Posterior vena cava (tissue), 2 donors: ENCODE measurements at regions of chr1 and their contacts with region 1.

Region 1: DNA sequence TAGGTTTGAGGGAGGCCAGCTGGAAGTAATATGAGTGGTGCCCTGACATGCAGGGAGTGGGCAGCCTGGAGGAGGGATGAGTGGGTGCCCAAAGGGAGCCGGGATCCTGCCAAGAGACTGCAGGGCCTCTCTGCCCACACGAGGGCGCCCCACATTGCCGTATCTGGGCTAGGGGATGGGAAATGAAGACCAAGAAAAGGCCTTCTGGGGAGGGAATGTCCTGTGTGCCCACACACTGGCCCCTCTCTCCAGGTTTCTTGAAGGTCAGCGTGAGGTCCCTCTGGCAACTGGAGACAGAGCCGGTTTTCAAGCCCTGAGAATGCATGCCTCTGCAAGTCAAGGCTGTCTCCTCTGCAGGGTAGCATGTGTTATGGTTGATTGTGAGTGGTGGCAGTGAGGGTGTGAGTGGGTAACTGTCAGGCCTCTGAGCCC is 94.1 kb upstream of the PPM1J start:
- DNase-seq: peak; percentile 92

Region 2: GRCh38 chr1:112715264-112716053 is 93.8 kb before region 1 on chr1 and contains the start of gene PPM1J:
- intact Hi-C with region 1: loop called (anchors 5 kb)
- DNase-seq: peak; percentile 99
- total RNA-seq, gene PPM1J: 2.1 to 3.0 TPM

Region 3: GRCh38 chr1:112840631-112841624 is 31.7 kb after region 1 on chr1:
- intact Hi-C with region 1: no loop called
- DNase-seq: no peak

Region 4: DNA sequence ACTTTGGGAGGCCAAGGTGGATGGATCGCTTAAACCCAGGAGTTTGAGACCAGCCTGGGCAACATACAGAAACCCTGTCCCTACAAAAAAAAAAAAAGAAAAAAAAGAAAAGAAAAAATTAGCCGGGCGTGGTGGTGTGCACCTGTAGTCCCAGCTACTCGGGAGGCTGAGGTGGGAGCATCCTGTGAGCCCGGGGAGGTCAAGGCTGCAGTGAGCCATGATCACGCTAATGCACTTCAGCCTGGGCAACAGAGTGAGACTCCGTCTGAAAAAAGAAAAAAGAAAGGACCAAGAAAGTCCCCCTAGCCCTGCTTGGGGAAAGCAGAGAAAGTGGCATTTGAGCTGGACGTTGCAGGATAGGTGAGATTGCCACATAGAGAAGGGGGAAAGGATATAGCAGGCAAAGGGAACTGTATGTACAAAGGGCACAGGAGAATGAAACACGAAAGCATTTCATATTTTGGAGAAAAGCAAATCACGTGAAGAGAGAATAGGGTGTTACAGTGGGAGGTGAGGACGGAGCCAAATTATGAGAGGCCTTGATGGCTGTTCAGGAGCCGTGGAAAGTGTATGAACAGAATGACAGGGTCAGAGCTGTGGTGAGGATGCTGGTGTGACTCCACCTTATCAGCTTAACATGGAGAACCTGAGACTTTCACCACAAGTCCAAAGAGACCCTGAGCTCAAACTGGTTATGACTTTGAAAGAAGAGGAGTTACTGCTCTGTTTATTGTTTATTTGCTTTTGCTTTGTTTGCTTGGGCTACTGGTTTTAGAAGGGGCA is 244.3 kb after region 1 on chr1:
- intact Hi-C with region 1: loop called (anchors 5 to 10 kb)
- DNase-seq: no peak